ENCODE measurements at regions of chr10 and their contacts with region 1.

Region 1: GRCh38 chr10:511101-511848 is 178.2 kb downstream of the DIP2C start:
- DNase-seq: peak; percentile 65
- H3K4me3 Mint-ChIP-seq: no peak overlapping the region
- H3K27ac Mint-ChIP-seq: no peak overlapping the region
- H3K4me1 Mint-ChIP-seq: peaks cover 8% of the 10 kb centered on the region
- H3K27me3 Mint-ChIP-seq: peaks cover 11% of the 10 kb centered on the region

Region 2: GRCh38 chr10:784403-785088 is 273.3 kb after region 1 on chr10:
- intact Hi-C with region 1: loop called (anchors 10 kb)
- DNase-seq: no peak
- H3K4me3 Mint-ChIP-seq: no peak overlapping the region
- H3K27ac Mint-ChIP-seq: no peak overlapping the region
- H3K4me1 Mint-ChIP-seq: no peaks in the 10 kb centered on the region
- H3K27me3 Mint-ChIP-seq: peaks cover 4% of the 10 kb centered on the region

Measured in activated T-helper 2 cell treated with anti-CD3 and anti-CD28 coated beads, Interferon-gamma antibody, Interleukin-2, Interleukin-4, amounts not matched to agents 10 μg/mL and 5 μg/mL and 100 μg/mL, durations not matched to agents 14 hours and 24 hours and 36 hours (primary cell).